ENCODE measurements at regions of chr17 and their contacts with region 1.

Region 1: DNA sequence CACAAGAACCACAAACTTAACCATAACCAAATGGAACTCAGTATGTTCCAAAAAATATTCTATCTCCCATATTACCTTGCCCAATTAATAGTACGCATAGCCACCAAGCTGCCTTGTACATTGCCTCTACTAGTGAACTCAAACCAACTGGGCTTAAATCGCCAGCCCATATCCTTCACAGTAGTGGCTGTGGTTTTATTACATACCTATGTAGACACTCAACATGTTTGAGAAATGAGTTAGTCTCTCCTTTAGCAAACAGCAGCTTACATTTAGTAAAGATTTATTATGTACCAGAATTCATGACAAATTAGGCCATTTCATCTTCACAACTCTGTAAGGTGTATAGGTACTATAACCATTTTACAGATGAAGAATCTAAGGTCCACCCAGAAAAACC is 41.4 kb downstream of the GRB2 start:
- DNase-seq: peak; percentile 84
- ATAC-seq: peak; percentile 86
- H3K4me3 ChIP-seq: no peak overlapping the region
- H3K27ac ChIP-seq: no peak overlapping the region
- H3K4me1 ChIP-seq: peaks cover 15% of the 10 kb centered on the region
- H3K27me3 ChIP-seq: no peaks in the 10 kb centered on the region
- CTCF ChIP-seq: no peak
- POLR2A ChIP-seq: no peak
- RAD21 ChIP-seq: no peak

Region 2: DNA sequence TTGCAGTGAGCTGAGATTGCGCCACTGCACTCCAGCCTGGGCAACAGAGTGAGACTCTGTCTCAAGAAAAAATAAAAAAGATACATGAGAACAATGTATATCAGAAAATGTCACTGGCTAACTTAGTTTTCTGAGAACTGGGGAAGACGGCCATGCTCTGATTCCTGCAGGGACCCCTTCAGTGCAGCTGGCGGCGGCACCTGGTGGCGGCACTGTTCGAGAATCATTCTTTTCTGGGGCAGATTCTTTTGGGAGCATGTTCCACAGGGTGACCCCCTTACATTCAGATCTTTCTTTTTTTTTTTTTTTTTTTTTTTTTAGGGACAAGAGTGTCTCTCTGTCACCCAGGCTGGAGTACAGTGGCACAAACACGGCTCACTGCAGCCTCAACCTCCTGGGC is 79.7 kb before region 1 on chr17:
- CTCF ChIA-PET with region 1: no interaction called
- POLR2A ChIA-PET with region 1: no interaction called
- dilution Hi-C with region 1: no loop called
- in situ Hi-C with region 1: no loop called
- intact Hi-C with region 1: no loop called
- DNase-seq: no peak
- ATAC-seq: no peak
- H3K4me3 ChIP-seq: no peak overlapping the region
- H3K27ac ChIP-seq: no peak overlapping the region
- H3K4me1 ChIP-seq: no peaks in the 10 kb centered on the region
- H3K27me3 ChIP-seq: no peaks in the 10 kb centered on the region
- CTCF ChIP-seq: no peak
- POLR2A ChIP-seq: no peak
- RAD21 ChIP-seq: no peak

Region 3: GRCh38 chr17:75313941-75314551 is 50.0 kb before region 1 on chr17:
- CTCF ChIA-PET with region 1: no interaction called
- POLR2A ChIA-PET with region 1: no interaction called
- dilution Hi-C with region 1: no loop called
- in situ Hi-C with region 1: no loop called
- intact Hi-C with region 1: no loop called
- DNase-seq: peak; percentile 20
- ATAC-seq: peak; percentile 38; the same call in 1 of the 2 replicates
- H3K4me3 ChIP-seq: no peak overlapping the region
- H3K27ac ChIP-seq: no peak overlapping the region
- H3K4me1 ChIP-seq: peaks cover 9% of the 10 kb centered on the region; the same call in 1 of the 2 replicates
- H3K27me3 ChIP-seq: no peaks in the 10 kb centered on the region
- CTCF ChIP-seq: no peak
- POLR2A ChIP-seq: no peak
- RAD21 ChIP-seq: no peak

Region 4: GRCh38 chr17:75325827-75326225 is 38.3 kb before region 1 on chr17:
- CTCF ChIA-PET with region 1: interaction called, 7 read pairs
- POLR2A ChIA-PET with region 1: no interaction called
- dilution Hi-C with region 1: no loop called
- in situ Hi-C with region 1: no loop called
- intact Hi-C with region 1: loop called (anchors 5 kb)
- DNase-seq: peak; percentile 35
- ATAC-seq: no peak
- H3K4me3 ChIP-seq: no peak overlapping the region
- H3K27ac ChIP-seq: no peak overlapping the region
- H3K4me1 ChIP-seq: peaks cover 5% of the 10 kb centered on the region
- H3K27me3 ChIP-seq: no peaks in the 10 kb centered on the region
- CTCF ChIP-seq: no peak
- POLR2A ChIP-seq: no peak
- RAD21 ChIP-seq: no peak